H1 (cell line): ENCODE measurements at regions of chr5 and their contacts with region 1.

Region 1: GRCh38 chr5:7927466-7928375 is 58.8 kb downstream of the MTRR start:
- DNase-seq: peak; percentile 47 to 76
- H3K4me3 ChIP-seq: no peak overlapping the region
- H3K27ac ChIP-seq: no peak overlapping the region
- H3K4me1 ChIP-seq: no peaks in the 10 kb centered on the region
- H3K27me3 ChIP-seq: peaks cover 0 to 2% (median 0%) of the 10 kb centered on the region in 4 experiments; a peak in 1 of 7 replicates
- CTCF ChIP-seq: peak; percentile 73 to 96 (median 82)
- EP300 ChIP-seq: no peak
- POLR2A ChIP-seq: no peak
- RAD21 ChIP-seq: peak; percentile 98

Region 2: GRCh38 chr5:7678030-7678429 is 249.7 kb before region 1 on chr5:
- CTCF ChIA-PET with region 1: no interaction called
- POLR2A ChIA-PET with region 1: no interaction called
- DNase-seq: no peak
- H3K4me3 ChIP-seq: no peak overlapping the region
- H3K27ac ChIP-seq: no peak overlapping the region
- H3K4me1 ChIP-seq: no peaks in the 10 kb centered on the region
- H3K27me3 ChIP-seq: no peaks in the 10 kb centered on the region
- CTCF ChIP-seq: no peak
- EP300 ChIP-seq: no peak
- POLR2A ChIP-seq: no peak
- RAD21 ChIP-seq: no peak

Region 3: DNA sequence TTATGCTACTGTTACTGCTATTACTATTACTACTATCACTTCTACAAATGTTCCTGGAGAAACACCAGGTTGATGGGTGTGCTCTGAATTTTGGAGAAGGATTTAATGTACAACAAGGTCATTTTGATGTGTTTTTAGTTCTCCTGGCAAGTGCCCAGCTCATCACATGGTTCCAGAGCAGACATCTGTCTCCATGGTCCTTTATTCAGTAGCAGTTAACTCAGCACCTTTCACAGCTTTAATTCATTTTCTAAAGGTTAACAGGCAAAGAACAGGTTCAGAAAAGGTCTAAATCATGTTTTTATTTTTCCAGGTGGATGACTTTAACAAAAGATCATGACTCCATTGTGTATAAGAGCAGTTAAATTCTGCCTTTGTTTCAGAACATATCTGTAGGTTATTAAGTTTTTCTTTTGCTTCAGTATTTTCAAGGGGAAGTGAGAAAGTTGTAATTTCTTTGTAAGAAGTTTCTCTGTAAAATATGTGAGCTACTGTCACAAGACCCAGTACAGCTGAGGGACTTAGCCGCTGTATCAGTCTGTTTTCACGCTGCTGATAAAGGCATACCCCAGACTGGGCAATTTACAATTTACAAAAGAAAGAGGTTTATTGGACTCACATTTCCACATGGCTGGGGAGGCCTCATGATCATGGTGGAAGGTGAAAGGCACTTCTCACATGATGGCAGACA is 16.8 kb before region 1 on chr5:
- CTCF ChIA-PET with region 1: interaction called, 18 read pairs
- POLR2A ChIA-PET with region 1: no interaction called
- DNase-seq: no peak
- H3K4me3 ChIP-seq: no peak overlapping the region
- H3K27ac ChIP-seq: no peak overlapping the region
- H3K4me1 ChIP-seq: no peaks in the 10 kb centered on the region
- H3K27me3 ChIP-seq: no peaks in the 10 kb centered on the region
- CTCF ChIP-seq: no peak
- EP300 ChIP-seq: no peak
- POLR2A ChIP-seq: no peak
- RAD21 ChIP-seq: no peak

Region 4: GRCh38 chr5:7941692-7942091 is 14.0 kb after region 1 on chr5:
- CTCF ChIA-PET with region 1: interaction called, 27 read pairs
- POLR2A ChIA-PET with region 1: no interaction called
- DNase-seq: no peak
- H3K4me3 ChIP-seq: no peak overlapping the region
- H3K27ac ChIP-seq: no peak overlapping the region
- H3K4me1 ChIP-seq: no peaks in the 10 kb centered on the region
- H3K27me3 ChIP-seq: no peaks in the 10 kb centered on the region
- CTCF ChIP-seq: no peak
- EP300 ChIP-seq: no peak
- POLR2A ChIP-seq: no peak
- RAD21 ChIP-seq: no peak

Region 5: DNA sequence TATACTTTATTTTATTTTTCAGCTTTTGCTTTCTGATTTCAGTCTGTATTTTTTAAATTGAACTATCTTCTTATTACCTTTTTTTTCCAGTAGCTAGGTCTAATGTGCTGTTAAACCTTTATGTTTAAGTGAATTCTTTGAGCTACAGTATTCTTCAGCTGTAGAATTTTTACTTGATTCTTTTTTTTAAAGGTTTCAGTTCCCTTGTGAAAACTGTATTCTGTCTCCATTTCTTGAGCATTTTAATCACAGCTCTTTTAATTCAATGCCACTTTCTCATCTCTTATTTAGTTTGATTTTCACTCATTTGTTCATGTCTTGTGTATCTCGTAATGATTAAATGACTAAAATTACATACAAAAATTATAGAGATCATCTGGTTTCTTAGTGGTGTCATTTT is 175.0 kb after region 1 on chr5:
- CTCF ChIA-PET with region 1: interaction called, 10 read pairs
- POLR2A ChIA-PET with region 1: no interaction called
- DNase-seq: no peak
- H3K4me3 ChIP-seq: no peak overlapping the region
- H3K27ac ChIP-seq: no peak overlapping the region
- H3K4me1 ChIP-seq: no peaks in the 10 kb centered on the region
- H3K27me3 ChIP-seq: no peaks in the 10 kb centered on the region
- CTCF ChIP-seq: no peak
- EP300 ChIP-seq: no peak
- POLR2A ChIP-seq: no peak
- RAD21 ChIP-seq: no peak

Region 6: GRCh38 chr5:8184455-8185063 is 256.8 kb after region 1 on chr5:
- CTCF ChIA-PET with region 1: interaction called, 22 read pairs
- POLR2A ChIA-PET with region 1: no interaction called
- DNase-seq: peak; percentile 50 to 88
- H3K4me3 ChIP-seq: no peak overlapping the region
- H3K27ac ChIP-seq: no peak overlapping the region
- H3K4me1 ChIP-seq: peaks cover 0 to 5% (median 0%) of the 10 kb centered on the region in 4 experiments; a peak in 2 of 7 replicates
- H3K27me3 ChIP-seq: no peaks in the 10 kb centered on the region
- CTCF ChIP-seq: peak; percentile 69 to 96 (median 94)
- EP300 ChIP-seq: no peak
- POLR2A ChIP-seq: no peak
- RAD21 ChIP-seq: peak; percentile 73 to 77

Region 7: DNA sequence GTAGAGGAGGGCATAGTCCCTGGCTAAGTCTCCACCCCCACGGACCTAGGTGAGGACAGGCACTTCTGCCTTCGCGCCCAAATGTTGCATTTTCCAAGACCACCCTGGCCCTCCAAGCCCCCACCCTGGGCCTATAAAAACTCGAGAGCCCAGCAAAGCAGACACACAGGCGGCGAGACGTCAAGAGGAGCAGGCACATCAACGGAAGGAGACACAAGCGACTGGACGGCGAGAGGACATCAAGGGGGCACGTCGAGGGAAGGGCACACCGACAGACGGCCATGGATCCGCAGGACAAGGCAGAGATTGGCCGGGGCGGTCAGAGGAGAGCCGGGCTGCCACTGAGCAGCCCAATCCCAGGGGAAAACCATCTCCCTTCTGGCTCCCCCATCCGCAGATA is 289.2 kb after region 1 on chr5:
- CTCF ChIA-PET with region 1: interaction called, 10 read pairs
- POLR2A ChIA-PET with region 1: no interaction called
- DNase-seq: no peak
- H3K4me3 ChIP-seq: no peak overlapping the region
- H3K27ac ChIP-seq: no peak overlapping the region
- H3K4me1 ChIP-seq: no peaks in the 10 kb centered on the region
- H3K27me3 ChIP-seq: no peaks in the 10 kb centered on the region
- CTCF ChIP-seq: no peak
- EP300 ChIP-seq: no peak
- POLR2A ChIP-seq: no peak
- RAD21 ChIP-seq: no peak

Region 8: GRCh38 chr5:8842971-8843551 is 915.3 kb after region 1 on chr5:
- CTCF ChIA-PET with region 1: interaction called, 24 read pairs
- POLR2A ChIA-PET with region 1: interaction called, 3 read pairs
- DNase-seq: no peak
- H3K4me3 ChIP-seq: no peak overlapping the region
- H3K27ac ChIP-seq: no peak overlapping the region
- H3K4me1 ChIP-seq: no peaks in the 10 kb centered on the region; a peak in 1 of 7 replicates
- H3K27me3 ChIP-seq: no peaks in the 10 kb centered on the region; a peak in 1 of 7 replicates
- CTCF ChIP-seq: peak; percentile 25 to 39 (median 32); a peak in 3 of 4 replicates
- EP300 ChIP-seq: no peak
- POLR2A ChIP-seq: no peak
- RAD21 ChIP-seq: peak; percentile 42 to 45